IMR-90 (cell line): ENCODE measurements at regions of chr12 and their contacts with region 1.

Region 1: GRCh38 chr12:56258057-56258819 is at the start of gene ANKRD52:
- DNase-seq: peak; percentile 71
- ATAC-seq: peak; percentile 86
- H3K4me3 ChIP-seq: peak within 1 kb of the TSS; percentile 94
- H3K27ac ChIP-seq: peak within 1 kb of the TSS; percentile 94
- H3K4me1 ChIP-seq: peaks cover 22% of the 10 kb centered on the region
- H3K27me3 ChIP-seq: no peaks in the 10 kb centered on the region
- CTCF ChIP-seq: peak; percentile 82
- POLR2A ChIP-seq: no peak
- RAD21 ChIP-seq: peak; percentile 34
- total RNA-seq, gene ANKRD52: 15.4 and 16.1 TPM in 2 replicates

Region 2: DNA sequence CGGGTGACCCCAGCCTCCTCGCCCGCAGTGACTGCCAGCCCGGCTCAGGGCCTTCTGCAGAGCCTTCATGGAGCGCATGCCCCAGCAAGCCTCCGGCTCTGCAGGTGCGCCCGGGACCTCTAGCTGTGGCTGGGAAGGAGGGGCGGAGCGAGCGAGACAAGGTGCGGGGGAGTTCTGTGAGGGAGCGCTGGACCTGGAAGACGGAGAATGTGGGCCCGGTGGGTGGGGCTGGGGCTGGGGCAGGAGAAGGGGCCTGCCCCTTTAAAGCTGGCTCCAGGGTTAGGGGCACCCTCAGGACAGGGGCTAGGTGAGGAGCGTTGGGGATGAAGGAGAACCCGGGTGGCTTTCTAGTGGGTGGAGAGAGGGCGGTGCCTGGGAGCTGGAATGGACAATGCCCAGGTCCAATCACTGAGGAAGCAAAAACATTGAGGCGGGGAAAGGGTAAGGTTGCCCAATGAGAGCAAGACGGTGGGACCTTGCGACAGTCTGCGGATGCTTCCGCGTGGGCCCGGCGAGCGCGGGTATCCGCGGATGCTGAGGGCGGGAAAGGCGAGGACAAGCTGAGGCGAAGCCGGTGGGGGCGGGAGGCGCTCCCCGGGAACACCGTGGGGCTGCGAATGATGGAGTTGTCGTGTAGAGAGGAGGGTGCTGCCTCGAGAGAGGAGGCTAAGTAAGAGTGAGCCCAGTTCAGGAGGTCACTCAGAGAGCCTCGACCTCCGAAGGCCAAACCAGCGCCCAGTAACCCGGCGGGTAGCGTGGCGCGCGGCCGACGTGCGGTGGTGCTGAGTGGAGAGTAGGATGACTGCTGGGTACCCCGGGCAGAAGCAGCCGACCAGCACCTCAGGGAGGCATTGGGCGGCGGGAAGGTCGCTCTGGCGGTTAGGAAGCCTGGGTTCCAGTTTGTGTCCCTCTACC is 230.1 kb after region 1 on chr12 and contains the start of gene GLS2:
- CTCF ChIA-PET with region 1: no interaction called
- POLR2A ChIA-PET with region 1: interaction called, 16 read pairs
- dilution Hi-C with region 1: no loop called
- in situ Hi-C with region 1: no loop called
- intact Hi-C with region 1: no loop called
- DNase-seq: peak; percentile 73
- ATAC-seq: peak; percentile 97
- H3K4me3 ChIP-seq: peak within 1 kb of the TSS; percentile 34
- H3K27ac ChIP-seq: no peak within 1 kb of the TSS
- H3K4me1 ChIP-seq: peaks cover 2% of the 10 kb centered on the region; the same call in 1 of the 2 replicates
- H3K27me3 ChIP-seq: peaks cover 32% of the 10 kb centered on the region
- CTCF ChIP-seq: no peak
- POLR2A ChIP-seq: no peak
- RAD21 ChIP-seq: no peak
- total RNA-seq, gene GLS2: under 0.01 and 0.36 TPM in 2 replicates

Region 3: DNA sequence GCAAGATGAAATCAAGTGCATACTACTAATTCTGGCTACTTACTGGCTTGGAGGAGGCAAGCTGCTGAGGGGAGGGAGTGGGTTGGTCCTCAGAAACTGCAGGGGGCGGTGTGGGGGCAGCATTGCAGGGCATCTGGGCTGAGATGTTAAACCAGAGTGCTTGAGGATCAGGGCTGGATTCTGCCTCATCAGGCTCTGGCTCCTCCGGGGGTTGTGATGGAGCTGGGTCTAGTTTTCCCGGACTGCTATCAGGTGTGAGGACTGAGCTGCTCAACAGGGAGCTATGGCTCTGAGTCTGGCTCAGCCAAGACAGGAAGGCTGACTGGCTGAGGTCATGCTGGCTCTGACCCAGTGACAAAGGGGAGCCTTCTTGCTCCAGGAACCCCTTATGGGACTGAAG is 343.3 kb after region 1 on chr12:
- CTCF ChIA-PET with region 1: no interaction called
- POLR2A ChIA-PET with region 1: no interaction called
- dilution Hi-C with region 1: no loop called
- in situ Hi-C with region 1: no loop called
- intact Hi-C with region 1: no loop called
- DNase-seq: no peak
- ATAC-seq: no peak; the same call in 1 of the 2 replicates
- H3K4me3 ChIP-seq: no peak overlapping the region
- H3K27ac ChIP-seq: no peak overlapping the region
- H3K4me1 ChIP-seq: peaks cover 4% of the 10 kb centered on the region; the same call in 1 of the 2 replicates
- H3K27me3 ChIP-seq: no peaks in the 10 kb centered on the region
- CTCF ChIP-seq: no peak; the same call in 1 of the 2 replicates
- POLR2A ChIP-seq: no peak
- RAD21 ChIP-seq: 0 out of 2 replicates have a peak, but pooled peaks have one; percentile 8